Activated T-helper 1 cell treated with anti-CD3 and anti-CD28 coated beads, Interleukin-12 subunit alpha, Interleukin-12 subunit beta, Interleukin-2, Interleukin-4 antibody, amounts not matched to agents 30 ng/mL and 10 ng/mL and 1 ng/mL, durations not matched to agents 14 hours and 24 hours and 36 hours (primary cell): ENCODE measurements at regions of chr16 and their contacts with region 1.

Region 1: GRCh38 chr16:30534368-30535105 is at the start of gene ZNF747:
- DNase-seq: peak; percentile 88
- H3K4me3 Mint-ChIP-seq: peak within 1 kb of the TSS; percentile 98
- H3K27ac Mint-ChIP-seq: peak within 1 kb of the TSS; percentile 99
- H3K4me1 Mint-ChIP-seq: peaks cover 39% of the 10 kb centered on the region
- H3K27me3 Mint-ChIP-seq: no peaks in the 10 kb centered on the region
- total RNA-seq, gene ZNF747: 13.8 and 15.8 TPM in 2 replicates

Region 2: GRCh38 chr16:30370444-30371247 is 163.9 kb before region 1 on chr16 and contains the start of gene TBC1D10B:
- intact Hi-C with region 1: loop called (anchors 1 kb)
- DNase-seq: peak; percentile 99
- H3K4me3 Mint-ChIP-seq: peak within 1 kb of the TSS; percentile 94
- H3K27ac Mint-ChIP-seq: peak within 1 kb of the TSS; percentile 89
- H3K4me1 Mint-ChIP-seq: peaks cover 41% of the 10 kb centered on the region
- H3K27me3 Mint-ChIP-seq: no peaks in the 10 kb centered on the region
- total RNA-seq, gene TBC1D10B: 68.9 and 73.6 TPM in 2 replicates

Region 3: DNA sequence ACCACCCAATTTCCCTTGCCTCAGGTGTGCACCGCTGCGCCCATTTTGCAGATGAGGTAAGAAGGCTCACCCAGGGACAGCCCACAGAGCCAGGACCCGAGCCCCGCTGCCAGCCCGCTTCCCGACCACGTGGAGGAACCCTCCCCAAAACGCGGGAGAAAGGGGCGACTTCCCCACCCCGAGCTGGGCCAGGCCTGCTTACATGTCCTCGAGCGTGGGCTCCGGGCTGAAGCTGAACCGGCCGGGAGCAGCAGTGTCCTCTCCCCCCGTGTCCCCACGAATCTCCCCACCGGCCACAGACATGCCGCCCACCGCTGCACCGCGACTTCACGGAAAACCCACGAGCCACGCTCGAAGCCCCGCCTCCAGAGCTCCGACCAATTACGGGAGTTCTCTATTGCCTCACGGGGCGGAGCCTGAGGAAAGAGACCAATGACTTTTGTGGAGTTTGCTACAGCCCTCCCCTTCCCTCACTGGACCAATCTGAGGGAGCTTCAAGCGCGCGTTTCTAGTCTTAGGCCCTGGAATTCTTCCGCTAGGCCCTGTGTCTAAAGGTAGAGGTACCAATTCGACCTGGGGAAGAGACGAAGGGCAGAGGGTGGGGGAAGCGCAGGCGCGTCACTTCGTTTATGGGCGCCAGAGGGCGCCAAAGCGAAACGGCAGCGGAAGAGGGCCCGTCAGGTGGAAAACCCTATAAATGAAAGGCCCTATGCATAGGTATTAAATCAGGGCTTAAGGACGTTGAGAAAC is 104.7 kb before region 1 on chr16 and contains the start of gene DCTPP1:
- intact Hi-C with region 1: loop called (anchors 1 kb)
- DNase-seq: peak; percentile 96
- H3K4me3 Mint-ChIP-seq: no peak within 1 kb of the TSS
- H3K27ac Mint-ChIP-seq: no peak within 1 kb of the TSS
- H3K4me1 Mint-ChIP-seq: peaks cover 31% of the 10 kb centered on the region
- H3K27me3 Mint-ChIP-seq: no peaks in the 10 kb centered on the region
- total RNA-seq, gene DCTPP1: 173 and 178 TPM in 2 replicates

Region 4: GRCh38 chr16:30551781-30552180 is 17.2 kb after region 1 on chr16:
- intact Hi-C with region 1: loop called (anchors 1 kb)
- DNase-seq: peak; percentile 66
- H3K4me3 Mint-ChIP-seq: peak overlapping the region; percentile 59
- H3K27ac Mint-ChIP-seq: peak overlapping the region; percentile 93
- H3K4me1 Mint-ChIP-seq: peaks cover 56% of the 10 kb centered on the region
- H3K27me3 Mint-ChIP-seq: no peaks in the 10 kb centered on the region

Region 5: GRCh38 chr16:30602616-30603277 is 68.2 kb after region 1 on chr16:
- intact Hi-C with region 1: loop called (anchors 1 kb)
- DNase-seq: no peak
- H3K4me3 Mint-ChIP-seq: no peak overlapping the region
- H3K27ac Mint-ChIP-seq: peak overlapping the region; percentile 40
- H3K4me1 Mint-ChIP-seq: peaks cover 12% of the 10 kb centered on the region
- H3K27me3 Mint-ChIP-seq: no peaks in the 10 kb centered on the region